ENCODE measurements at regions of chr15 and their contacts with region 1.

Region 1: DNA sequence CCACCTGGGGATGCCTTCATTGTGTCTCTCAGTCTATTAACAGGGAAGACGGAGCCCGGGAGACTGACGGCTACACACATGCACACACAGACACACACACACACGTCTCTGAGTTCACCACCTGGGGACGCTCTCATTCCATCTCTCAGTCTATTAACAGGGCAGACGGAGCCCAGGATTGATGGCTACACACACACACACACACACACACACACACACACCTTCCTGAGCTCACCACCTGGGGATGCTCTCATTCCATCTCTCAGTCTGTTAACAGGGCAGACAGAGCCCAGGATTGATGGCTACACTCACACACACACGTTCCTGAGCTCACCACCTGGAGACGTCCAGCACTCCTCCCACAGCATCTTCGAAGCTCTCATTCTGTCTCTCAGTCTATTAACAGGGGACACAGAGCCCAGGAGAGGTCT is 143.9 kb downstream of the OR4M2 start:
- DNase-seq: peak in 1 of 5 donors; percentile 22
- H3K4me3 ChIP-seq: no peak overlapping the region
- H3K4me3 Mint-ChIP-seq: peak overlapping the region in 3 of 8 donors; percentile 2 to 55 (median 22)
- H3K27ac ChIP-seq: no peak overlapping the region
- H3K27ac Mint-ChIP-seq: peak overlapping the region in 4 of 7 donors; percentile 0 to 92 (median 30)
- H3K4me1 ChIP-seq: peaks cover 26% of the 10 kb centered on the region
- H3K4me1 Mint-ChIP-seq: peaks cover 18 to 38% (median 32%) of the 10 kb centered on the region in 4 donors
- H3K27me3 ChIP-seq: no peaks in the 10 kb centered on the region
- H3K27me3 Mint-ChIP-seq: no peaks in the 10 kb centered on the region

Region 2: GRCh38 chr15:22239806-22240180 is 15.5 kb after region 1 on chr15:
- CTCF ChIA-PET with region 1: no interaction called
- POLR2A ChIA-PET with region 1: no interaction called
- intact Hi-C with region 1: no loop called
- DNase-seq: no peak
- H3K4me3 ChIP-seq: no peak overlapping the region
- H3K4me3 Mint-ChIP-seq: no peak overlapping the region
- H3K27ac ChIP-seq: no peak overlapping the region
- H3K27ac Mint-ChIP-seq: no peak overlapping the region
- H3K4me1 ChIP-seq: no peaks in the 10 kb centered on the region
- H3K4me1 Mint-ChIP-seq: no peaks in the 10 kb centered on the region
- H3K27me3 ChIP-seq: no peaks in the 10 kb centered on the region
- H3K27me3 Mint-ChIP-seq: peaks cover 0 to 2% of the 10 kb centered on the region in 2 donors

Region 3: GRCh38 chr15:22262613-22263020 is 38.4 kb after region 1 on chr15:
- CTCF ChIA-PET with region 1: interaction called, 17 read pairs
- POLR2A ChIA-PET with region 1: no interaction called
- intact Hi-C with region 1: no loop called
- DNase-seq: peak in 3 of 5 donors; percentile 53 to 63 (median 56)
- H3K4me3 ChIP-seq: peak overlapping the region; percentile 6 to 18
- H3K4me3 Mint-ChIP-seq: no peak overlapping the region
- H3K27ac ChIP-seq: peak overlapping the region; percentile 3
- H3K27ac Mint-ChIP-seq: no peak overlapping the region
- H3K4me1 ChIP-seq: peaks cover 63% of the 10 kb centered on the region
- H3K4me1 Mint-ChIP-seq: peaks cover 12 to 21% (median 17%) of the 10 kb centered on the region in 4 donors
- H3K27me3 ChIP-seq: no peaks in the 10 kb centered on the region
- H3K27me3 Mint-ChIP-seq: no peaks in the 10 kb centered on the region